ENCODE measurements at regions of chr12 and their contacts with region 1.

Region 1: DNA sequence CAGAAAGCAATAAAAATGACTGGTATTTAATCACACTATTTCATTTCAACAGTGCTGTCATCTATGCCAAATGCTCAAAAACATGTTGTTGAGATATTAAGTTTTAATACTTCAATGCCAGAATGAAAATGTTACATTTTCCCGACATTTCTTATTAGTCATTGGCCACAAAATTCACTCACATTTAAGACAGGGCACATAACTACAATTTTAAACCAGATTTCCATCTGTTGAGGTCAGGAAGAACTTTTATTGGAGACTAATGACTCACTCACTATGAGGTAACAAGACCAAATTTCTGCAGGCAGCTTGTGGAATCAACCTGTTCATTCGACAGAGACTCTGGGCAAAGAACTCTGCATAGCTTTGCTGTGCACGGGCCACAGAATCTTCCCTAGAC is 36.8 kb downstream of the PPTC7 start:
- DNase-seq: peak; percentile 97
- ATAC-seq: peak; percentile 76
- H3K4me3 ChIP-seq: peak overlapping the region; percentile 32; the same call in 1 of the 2 replicates
- H3K27ac ChIP-seq: peak overlapping the region; percentile 92
- H3K4me1 ChIP-seq: peaks cover 27% of the 10 kb centered on the region
- H3K27me3 ChIP-seq: no peaks in the 10 kb centered on the region
- CTCF ChIP-seq: no peak

Region 2: GRCh38 chr12:109612975-109613502 is 933.3 kb before region 1 on chr12:
- CTCF ChIA-PET with region 1: no interaction called
- POLR2A ChIA-PET with region 1: no interaction called
- intact Hi-C with region 1: no loop called
- DNase-seq: peak; percentile 63
- ATAC-seq: peak; percentile 79
- H3K4me3 ChIP-seq: no peak overlapping the region
- H3K27ac ChIP-seq: no peak overlapping the region
- H3K4me1 ChIP-seq: no peaks in the 10 kb centered on the region
- H3K27me3 ChIP-seq: peaks cover 27% of the 10 kb centered on the region
- CTCF ChIP-seq: peak; percentile 67

Region 3: GRCh38 chr12:110056147-110056484 is 490.2 kb before region 1 on chr12:
- CTCF ChIA-PET with region 1: interaction called, 13 read pairs
- POLR2A ChIA-PET with region 1: no interaction called
- intact Hi-C with region 1: no loop called
- DNase-seq: no peak
- ATAC-seq: peak; percentile 30
- H3K4me3 ChIP-seq: no peak overlapping the region
- H3K27ac ChIP-seq: peak overlapping the region; percentile 80
- H3K4me1 ChIP-seq: peaks cover 25% of the 10 kb centered on the region
- H3K27me3 ChIP-seq: no peaks in the 10 kb centered on the region
- CTCF ChIP-seq: no peak

Region 4: GRCh38 chr12:110468212-110469048 is 77.9 kb before region 1 on chr12 and contains the starts of genes FAM216A and GPN3:
- CTCF ChIA-PET with region 1: no interaction called
- POLR2A ChIA-PET with region 1: no interaction called
- intact Hi-C with region 1: loop called (anchors 2 kb)
- DNase-seq: peak; percentile 99
- ATAC-seq: peak; percentile 84
- H3K4me3 ChIP-seq: peak within 1 kb of the TSS; percentile 84
- H3K27ac ChIP-seq: peak within 1 kb of the TSS; percentile 75
- H3K4me1 ChIP-seq: peaks cover 14% of the 10 kb centered on the region
- H3K27me3 ChIP-seq: no peaks in the 10 kb centered on the region
- CTCF ChIP-seq: no peak
- total RNA-seq, gene FAM216A: 19.5 and 27.8 TPM in 2 replicates
- total RNA-seq, gene GPN3: 31.4 and 32.5 TPM in 2 replicates

Region 5: DNA sequence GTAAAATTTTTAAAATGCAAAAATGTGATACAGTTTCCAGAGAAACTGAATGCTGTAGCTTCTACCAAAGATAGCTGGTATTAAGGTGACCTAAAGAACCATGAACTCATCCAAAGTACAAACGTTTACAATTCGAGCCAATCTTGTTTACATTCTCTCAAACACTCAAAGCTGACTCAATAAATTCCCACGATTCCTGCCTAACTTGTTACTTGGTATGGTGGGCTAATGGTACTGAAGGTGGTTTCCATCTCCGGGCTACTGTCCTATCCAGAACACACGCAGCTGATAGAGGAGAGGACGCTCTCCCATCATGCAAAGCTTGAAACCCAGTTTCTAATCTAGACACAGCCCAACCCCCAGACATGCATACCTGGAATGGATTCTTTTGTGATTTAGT is 12.7 kb before region 1 on chr12:
- CTCF ChIA-PET with region 1: interaction called, 3 read pairs
- POLR2A ChIA-PET with region 1: no interaction called
- intact Hi-C with region 1: loop called (anchors 1 kb)
- DNase-seq: peak; percentile 87
- ATAC-seq: peak; percentile 48
- H3K4me3 ChIP-seq: no peak overlapping the region
- H3K27ac ChIP-seq: peak overlapping the region; percentile 47
- H3K4me1 ChIP-seq: peaks cover 31% of the 10 kb centered on the region
- H3K27me3 ChIP-seq: no peaks in the 10 kb centered on the region
- CTCF ChIP-seq: no peak

Region 6: DNA sequence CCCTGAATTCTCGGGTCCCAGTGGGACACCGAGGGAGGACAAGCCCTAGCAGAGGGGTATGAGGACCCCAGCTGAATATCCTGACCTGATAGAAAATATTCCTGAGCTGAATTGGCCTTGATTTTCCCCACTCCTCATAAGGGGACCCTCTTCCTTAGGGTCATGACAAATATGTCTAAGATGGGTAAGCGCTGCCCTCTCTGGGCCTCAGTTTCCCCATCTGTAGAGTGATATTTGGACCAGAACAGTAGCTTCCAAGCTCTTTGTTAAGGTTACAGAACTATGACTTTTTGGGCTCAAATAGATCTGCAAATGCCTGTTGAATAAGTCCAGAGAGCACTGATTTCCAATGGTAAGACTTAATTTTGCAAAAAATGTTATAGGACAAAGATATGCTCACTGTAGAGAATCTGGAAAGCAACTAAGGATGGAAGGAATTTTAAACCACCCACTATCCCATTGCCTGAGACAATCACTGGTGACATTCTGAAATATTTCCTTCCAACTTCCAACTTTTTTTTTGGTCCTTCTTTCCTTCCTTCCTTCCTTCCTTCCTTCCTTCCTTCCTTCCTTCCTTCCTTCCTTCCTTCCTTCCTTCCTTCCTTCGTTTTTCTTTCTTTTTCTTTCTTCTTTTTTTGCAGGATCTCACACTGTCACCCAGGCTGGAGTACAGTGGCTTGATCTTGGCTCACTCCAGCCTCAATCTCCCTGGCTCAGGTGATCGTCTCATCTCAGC is 342.1 kb after region 1 on chr12:
- CTCF ChIA-PET with region 1: no interaction called
- POLR2A ChIA-PET with region 1: no interaction called
- intact Hi-C with region 1: loop called (anchors 5 kb)
- DNase-seq: no peak
- ATAC-seq: no peak
- H3K4me3 ChIP-seq: peak overlapping the region; percentile 84; the same call in 1 of the 2 replicates
- H3K27ac ChIP-seq: no peak overlapping the region
- H3K4me1 ChIP-seq: peaks cover 8% of the 10 kb centered on the region; the same call in 1 of the 2 replicates
- H3K27me3 ChIP-seq: no peaks in the 10 kb centered on the region
- CTCF ChIP-seq: no peak; the same call in 1 of the 2 replicates

Region 7: GRCh38 chr12:110937104-110937641 is 390.8 kb after region 1 on chr12:
- CTCF ChIA-PET with region 1: no interaction called
- POLR2A ChIA-PET with region 1: no interaction called
- intact Hi-C with region 1: no loop called
- DNase-seq: peak; percentile 79
- ATAC-seq: peak; percentile 53
- H3K4me3 ChIP-seq: peak overlapping the region; percentile 23; the same call in 1 of the 2 replicates
- H3K27ac ChIP-seq: no peak overlapping the region
- H3K4me1 ChIP-seq: peaks cover 15% of the 10 kb centered on the region
- H3K27me3 ChIP-seq: no peaks in the 10 kb centered on the region
- CTCF ChIP-seq: peak; percentile 98